ENCODE measurements at regions of chr6 and their contacts with region 1.

Region 1: GRCh38 chr6:168370310-168370991 is 50.9 kb upstream of the DACT2 start:
- DNase-seq: peak; percentile 91

Region 2: DNA sequence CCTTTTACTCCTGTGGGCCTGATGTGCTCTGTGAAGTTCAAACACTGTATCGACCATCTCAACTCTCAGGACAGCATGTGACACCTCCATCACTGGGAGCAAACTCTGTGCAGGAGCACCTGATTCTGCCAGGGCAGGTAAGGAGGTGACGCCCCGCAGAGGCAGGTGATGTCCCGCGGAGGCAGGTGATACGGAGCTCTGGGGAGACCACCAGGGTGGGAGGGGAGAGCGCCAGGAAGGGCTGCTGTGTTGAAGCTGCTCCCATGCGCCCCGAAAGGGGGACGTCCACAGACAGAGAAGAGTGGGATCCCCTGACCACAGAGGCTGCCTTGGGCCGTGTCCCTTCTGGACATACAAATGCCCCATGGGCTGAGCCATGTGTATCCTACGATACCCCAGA is 109.2 kb before region 1 on chr6:
- CTCF ChIA-PET with region 1: no interaction called
- POLR2A ChIA-PET with region 1: no interaction called
- DNase-seq: no peak

Region 3: GRCh38 chr6:168354338-168354737 is 16.1 kb before region 1 on chr6:
- CTCF ChIA-PET with region 1: no interaction called
- POLR2A ChIA-PET with region 1: no interaction called
- DNase-seq: no peak

Region 4: GRCh38 chr6:168388641-168389381 is 18.4 kb after region 1 on chr6:
- CTCF ChIA-PET with region 1: no interaction called
- POLR2A ChIA-PET with region 1: no interaction called
- DNase-seq: no peak

Region 5: GRCh38 chr6:168880271-168880670 is 509.8 kb after region 1 on chr6:
- CTCF ChIA-PET with region 1: interaction called, 16 read pairs
- POLR2A ChIA-PET with region 1: no interaction called
- DNase-seq: no peak

Region 6: DNA sequence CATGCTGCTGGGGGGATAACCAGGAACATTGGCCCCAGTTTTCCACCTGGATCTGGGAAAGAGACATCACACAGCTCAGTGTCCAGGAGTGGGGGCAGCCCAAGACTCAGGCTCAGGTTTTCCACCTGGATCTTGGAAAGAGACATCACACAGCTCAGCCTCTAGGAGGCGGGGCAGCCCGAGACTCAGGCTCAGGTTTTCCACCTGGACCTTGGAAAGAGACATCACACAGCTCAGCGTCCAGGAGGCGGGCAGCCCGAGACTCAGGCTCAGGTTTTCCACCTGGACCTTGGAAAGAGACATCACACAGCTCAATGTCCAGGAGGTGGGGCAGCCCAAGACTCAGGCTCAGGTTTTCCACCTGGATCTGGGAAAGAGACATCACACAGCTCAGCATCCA is 521.6 kb after region 1 on chr6:
- CTCF ChIA-PET with region 1: interaction called, 16 read pairs
- POLR2A ChIA-PET with region 1: no interaction called
- DNase-seq: no peak